Activated naive CD4-positive, alpha-beta T cell treated with anti-CD3 and anti-CD28 coated beads for 36 hours (primary cell): ENCODE measurements at regions of chr6 and their contacts with region 1.

Region 1: GRCh38 chr6:53070806-53071205 is 5.6 kb downstream of the FBXO9 start:
- DNase-seq: peak; percentile 56
- H3K4me3 Mint-ChIP-seq: no peak overlapping the region
- H3K27ac Mint-ChIP-seq: no peak overlapping the region
- H3K4me1 Mint-ChIP-seq: peaks cover 42% of the 10 kb centered on the region
- H3K27me3 Mint-ChIP-seq: no peaks in the 10 kb centered on the region

Region 2: GRCh38 chr6:52815167-52816092 is 255.4 kb before region 1 on chr6:
- CTCF ChIA-PET with region 1: interaction called, 8 read pairs
- intact Hi-C with region 1: loop called (anchors 1 kb)
- DNase-seq: peak; percentile 67
- H3K4me3 Mint-ChIP-seq: no peak overlapping the region
- H3K27ac Mint-ChIP-seq: no peak overlapping the region
- H3K4me1 Mint-ChIP-seq: no peaks in the 10 kb centered on the region
- H3K27me3 Mint-ChIP-seq: no peaks in the 10 kb centered on the region

Region 3: DNA sequence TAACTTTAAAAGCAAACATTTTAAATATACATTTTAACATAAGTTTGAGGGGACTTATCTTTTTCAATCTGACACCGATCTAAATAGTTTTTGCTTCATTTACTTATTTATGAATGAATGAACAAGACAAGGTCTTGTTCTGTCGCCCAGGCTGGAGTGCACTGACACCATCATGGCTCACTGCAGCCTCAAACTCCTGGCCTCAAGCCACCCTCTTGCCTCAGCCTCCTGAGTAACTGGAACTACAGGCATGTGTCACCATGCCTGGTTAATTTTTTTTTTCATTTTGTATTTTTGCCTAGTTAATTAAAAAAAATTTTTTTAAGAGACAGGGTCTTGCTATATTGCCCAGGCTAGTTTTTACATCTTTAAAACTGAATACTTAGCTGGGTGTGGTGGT is 19.8 kb after region 1 on chr6:
- CTCF ChIA-PET with region 1: no interaction called
- intact Hi-C with region 1: no loop called
- DNase-seq: no peak
- H3K4me3 Mint-ChIP-seq: no peak overlapping the region
- H3K27ac Mint-ChIP-seq: no peak overlapping the region
- H3K4me1 Mint-ChIP-seq: no peaks in the 10 kb centered on the region
- H3K27me3 Mint-ChIP-seq: no peaks in the 10 kb centered on the region